CD8-positive, alpha-beta memory T cell (primary cell): ENCODE measurements at regions of chr12 and their contacts with region 1.

Region 1: DNA sequence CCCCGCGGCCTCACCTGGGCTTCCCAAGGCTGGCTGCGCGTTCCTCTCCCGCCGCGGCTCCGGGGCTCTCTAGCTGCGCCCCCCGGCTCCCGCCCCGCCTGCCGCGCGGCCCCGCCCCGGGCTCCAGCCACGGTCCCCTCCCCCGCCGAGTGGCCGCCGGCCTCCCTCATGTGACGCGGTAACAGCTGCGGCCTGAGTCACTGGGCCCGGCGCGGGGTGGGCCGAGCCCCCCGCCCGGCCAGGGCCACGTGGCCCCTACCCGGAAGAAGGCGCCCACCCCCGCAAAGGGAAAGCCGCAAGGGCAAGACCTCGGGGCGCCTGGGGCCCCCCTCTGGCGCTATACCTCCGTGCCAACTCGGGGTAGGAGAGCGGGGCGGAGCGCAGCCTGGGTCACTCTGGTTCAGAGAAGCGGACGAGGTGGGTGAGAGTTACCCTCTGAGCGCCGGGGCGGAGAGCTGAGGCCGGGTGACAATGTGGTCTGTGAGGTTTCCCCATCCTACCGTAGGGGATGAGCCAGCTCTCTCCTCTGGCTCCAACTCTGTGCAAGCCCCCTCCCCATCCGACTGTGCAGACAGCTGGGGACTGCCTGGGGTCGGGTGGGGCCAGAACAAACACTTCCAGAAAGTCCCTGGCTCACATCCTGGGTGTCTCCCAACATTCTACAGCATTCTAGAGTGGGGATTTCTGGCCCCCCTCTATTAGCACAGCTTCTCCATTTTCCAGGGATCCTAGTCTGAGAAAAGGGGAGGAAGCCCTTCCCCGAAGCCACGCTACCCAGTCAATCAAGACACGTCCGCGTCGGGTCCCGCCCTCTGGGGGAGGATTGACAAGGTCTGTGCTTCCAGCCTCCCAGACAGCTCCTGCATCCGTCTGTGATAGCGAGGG is at the start of gene CD63:
- DNase-seq: peak; percentile 46 to 77 (median 50)
- H3K4me3 ChIP-seq: peak within 1 kb of the TSS; percentile 84
- H3K4me3 Mint-ChIP-seq: peak within 1 kb of the TSS; percentile 83 to 95 (median 88)
- H3K27ac ChIP-seq: peak within 1 kb of the TSS; percentile 83
- H3K27ac Mint-ChIP-seq: peak within 1 kb of the TSS; percentile 80 to 97 (median 92)
- H3K4me1 ChIP-seq: peaks cover 34% of the 10 kb centered on the region
- H3K4me1 Mint-ChIP-seq: peaks cover 37 to 46% (median 40%) of the 10 kb centered on the region in 3 donors
- H3K27me3 ChIP-seq: no peaks in the 10 kb centered on the region
- H3K27me3 Mint-ChIP-seq: no peaks in the 10 kb centered on the region
- total RNA-seq, gene CD63: 200 to 202 TPM

Region 2: DNA sequence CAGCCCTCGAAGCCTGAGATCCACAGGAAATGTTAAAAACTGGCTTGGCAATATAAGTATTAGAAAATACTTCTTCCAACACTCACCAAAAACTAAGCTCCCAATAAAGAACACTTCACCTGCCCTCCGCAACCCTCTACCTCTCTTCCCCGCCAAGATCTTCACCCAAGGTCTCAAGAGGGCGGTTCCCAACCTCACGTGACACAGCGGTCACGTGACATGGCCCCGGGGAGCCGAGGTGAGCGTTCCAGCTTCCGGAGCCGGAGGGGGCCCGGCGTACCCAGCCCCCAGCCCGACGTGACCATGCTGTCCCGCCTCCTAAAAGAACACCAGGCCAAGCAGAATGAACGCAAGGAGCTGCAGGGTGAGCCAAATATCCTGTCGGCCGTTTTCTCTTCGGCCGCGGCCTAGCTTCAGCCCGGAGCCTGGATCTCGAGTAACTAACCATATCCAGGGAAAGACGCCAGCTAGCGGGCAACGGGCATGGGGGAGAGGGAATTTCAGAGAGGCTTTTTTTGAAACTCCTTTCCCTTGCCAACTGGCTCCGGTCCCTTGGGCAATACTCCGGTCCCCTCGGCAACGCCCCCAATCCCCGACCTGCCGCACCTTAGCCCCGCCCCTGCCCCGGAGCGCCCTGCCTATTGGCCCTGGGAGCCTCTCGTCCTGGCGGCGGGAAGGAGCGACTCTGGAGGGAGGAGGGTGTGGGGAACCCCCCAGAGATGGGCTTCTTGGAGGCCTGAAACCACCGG is 13.2 kb before region 1 on chr12 and contains the start of gene BLOC1S1:
- CTCF ChIA-PET with region 1: interaction called, 20 read pairs
- POLR2A ChIA-PET with region 1: interaction called, 5 read pairs
- DNase-seq: peak; percentile 87 to 96 (median 92)
- H3K4me3 ChIP-seq: peak within 1 kb of the TSS; percentile 98
- H3K4me3 Mint-ChIP-seq: peak within 1 kb of the TSS; percentile 82 to 97 (median 93)
- H3K27ac ChIP-seq: peak within 1 kb of the TSS; percentile 79
- H3K27ac Mint-ChIP-seq: peak within 1 kb of the TSS; percentile 89 to 98 (median 95)
- H3K4me1 ChIP-seq: peaks cover 21% of the 10 kb centered on the region
- H3K4me1 Mint-ChIP-seq: peaks cover 31 to 57% (median 33%) of the 10 kb centered on the region in 3 donors
- H3K27me3 ChIP-seq: no peaks in the 10 kb centered on the region
- H3K27me3 Mint-ChIP-seq: peaks cover 0 to 5% of the 10 kb centered on the region in 2 donors
- total RNA-seq, gene BLOC1S1: 97.5 to 110 TPM

Region 3: DNA sequence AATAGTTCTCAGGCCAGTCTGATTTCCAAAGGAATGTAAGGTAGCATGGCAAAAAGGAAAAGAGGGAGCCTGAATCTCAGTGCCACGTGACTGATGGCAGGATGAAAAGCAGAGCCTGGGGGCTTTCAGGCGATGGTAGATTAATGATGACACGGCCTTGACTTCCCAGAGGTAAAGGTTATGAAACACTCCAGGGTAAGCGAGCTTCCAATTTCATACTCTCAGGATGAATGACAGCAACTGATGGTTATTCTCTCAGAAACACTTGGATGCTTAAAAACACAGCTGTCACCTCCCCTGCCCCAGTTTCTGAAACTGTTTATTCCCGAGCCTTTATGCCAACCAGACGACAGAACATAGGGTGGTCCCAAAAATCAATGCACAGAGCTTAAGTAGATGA is 42.6 kb after region 1 on chr12:
- CTCF ChIA-PET with region 1: no interaction called
- POLR2A ChIA-PET with region 1: no interaction called
- DNase-seq: no peak
- H3K4me3 ChIP-seq: no peak overlapping the region
- H3K4me3 Mint-ChIP-seq: no peak overlapping the region
- H3K27ac ChIP-seq: no peak overlapping the region
- H3K27ac Mint-ChIP-seq: peak overlapping the region in 6 of 8 donors; percentile 5 to 86 (median 37)
- H3K4me1 ChIP-seq: no peaks in the 10 kb centered on the region
- H3K4me1 Mint-ChIP-seq: peaks cover 16 to 34% (median 30%) of the 10 kb centered on the region in 3 donors
- H3K27me3 ChIP-seq: no peaks in the 10 kb centered on the region
- H3K27me3 Mint-ChIP-seq: no peaks in the 10 kb centered on the region